Body of pancreas (tissue), 4 donors: ENCODE measurements at regions of chr2 and their contacts with region 1.

Region 1: GRCh38 chr2:20398956-20399567 is 47.8 kb upstream of the RHOB start:
- DNase-seq: no peak
- ATAC-seq: no peak
- H3K4me3 ChIP-seq: no peak overlapping the region
- H3K27ac ChIP-seq: no peak overlapping the region
- H3K4me1 ChIP-seq: no peaks in the 10 kb centered on the region
- H3K27me3 ChIP-seq: no peaks in the 10 kb centered on the region
- CTCF ChIP-seq: no peak
- POLR2A ChIP-seq: no peak

Region 2: GRCh38 chr2:20642055-20642971 is 243.3 kb after region 1 on chr2:
- intact Hi-C with region 1: loop called (anchors 5 kb)
- DNase-seq: peak; percentile 81 to 88 (median 82)
- ATAC-seq: peak; percentile 93
- H3K4me3 ChIP-seq: no peak overlapping the region
- H3K27ac ChIP-seq: no peak overlapping the region
- H3K4me1 ChIP-seq: peaks cover 4% of the 10 kb centered on the region
- H3K27me3 ChIP-seq: no peaks in the 10 kb centered on the region
- CTCF ChIP-seq: peak; percentile 88 to 97 (median 94)
- POLR2A ChIP-seq: no peak